Breast epithelium (tissue), 4 donors: ENCODE measurements at regions of chr12 and their contacts with region 1.

Region 1: GRCh38 chr12:90712671-90713070 is 242.3 kb downstream of the CCER1 start:
- DNase-seq: no peak
- H3K4me3 ChIP-seq: no peak overlapping the region
- H3K27ac ChIP-seq: no peak overlapping the region
- H3K4me1 ChIP-seq: no peaks in the 10 kb centered on the region
- H3K27me3 ChIP-seq: no peaks in the 10 kb centered on the region
- CTCF ChIP-seq: no peak
- POLR2A ChIP-seq: no peak

Region 2: GRCh38 chr12:90163975-90164374 is 548.7 kb before region 1 on chr12:
- intact Hi-C with region 1: loop called (anchors 5 kb)
- DNase-seq: no peak
- H3K4me3 ChIP-seq: no peak overlapping the region
- H3K27ac ChIP-seq: no peak overlapping the region
- H3K4me1 ChIP-seq: no peaks in the 10 kb centered on the region
- H3K27me3 ChIP-seq: no peaks in the 10 kb centered on the region
- CTCF ChIP-seq: no peak
- POLR2A ChIP-seq: no peak

Region 3: DNA sequence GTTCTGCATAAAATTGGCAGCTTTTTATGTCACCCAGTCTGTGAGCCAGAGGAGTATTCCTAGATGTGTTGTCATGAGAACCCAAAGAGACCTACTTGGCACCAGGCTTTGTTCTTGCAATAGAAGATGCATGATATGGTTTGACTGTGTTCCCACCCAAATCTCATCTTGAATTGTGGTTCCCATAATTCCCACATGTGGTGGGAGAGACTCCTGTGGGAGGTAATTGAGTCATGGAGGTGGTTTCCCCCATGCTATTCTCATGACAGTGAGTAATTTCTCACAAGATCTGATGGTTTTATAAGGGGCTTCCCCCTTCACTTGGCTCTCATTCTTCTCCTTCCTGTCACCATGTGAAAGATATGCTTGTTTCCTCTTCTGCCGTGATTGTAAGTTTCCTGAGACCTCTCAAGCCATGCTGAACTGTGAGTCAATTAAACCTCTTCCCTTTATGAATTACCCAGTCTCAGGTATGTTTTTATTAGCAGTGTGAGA is 432.1 kb before region 1 on chr12:
- intact Hi-C with region 1: no loop called
- DNase-seq: no peak
- H3K4me3 ChIP-seq: no peak overlapping the region
- H3K27ac ChIP-seq: no peak overlapping the region
- H3K4me1 ChIP-seq: no peaks in the 10 kb centered on the region
- H3K27me3 ChIP-seq: no peaks in the 10 kb centered on the region
- CTCF ChIP-seq: no peak
- POLR2A ChIP-seq: no peak

Region 4: DNA sequence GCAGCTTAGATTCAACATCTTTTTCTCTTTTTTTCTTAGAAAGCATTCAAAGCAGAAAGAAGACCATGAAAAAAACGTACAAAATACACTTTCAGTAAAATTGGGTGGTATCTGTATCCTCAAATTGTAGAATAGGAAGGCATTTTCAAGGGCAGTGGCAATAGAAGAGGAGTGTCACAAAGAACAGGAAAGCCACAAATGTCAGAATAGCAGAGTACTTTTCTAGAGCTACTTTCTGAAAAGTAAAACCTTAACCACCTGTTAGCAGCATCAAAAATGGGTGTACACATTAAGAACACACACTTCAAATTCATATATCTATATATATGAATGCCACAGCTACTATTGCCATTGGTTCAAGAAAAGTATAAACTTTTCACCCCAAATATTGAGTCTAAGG is 882.0 kb after region 1 on chr12:
- intact Hi-C with region 1: no loop called
- DNase-seq: no peak
- H3K4me3 ChIP-seq: no peak overlapping the region
- H3K27ac ChIP-seq: no peak overlapping the region
- H3K4me1 ChIP-seq: no peaks in the 10 kb centered on the region
- H3K27me3 ChIP-seq: no peaks in the 10 kb centered on the region
- CTCF ChIP-seq: no peak
- POLR2A ChIP-seq: no peak

Region 5: DNA sequence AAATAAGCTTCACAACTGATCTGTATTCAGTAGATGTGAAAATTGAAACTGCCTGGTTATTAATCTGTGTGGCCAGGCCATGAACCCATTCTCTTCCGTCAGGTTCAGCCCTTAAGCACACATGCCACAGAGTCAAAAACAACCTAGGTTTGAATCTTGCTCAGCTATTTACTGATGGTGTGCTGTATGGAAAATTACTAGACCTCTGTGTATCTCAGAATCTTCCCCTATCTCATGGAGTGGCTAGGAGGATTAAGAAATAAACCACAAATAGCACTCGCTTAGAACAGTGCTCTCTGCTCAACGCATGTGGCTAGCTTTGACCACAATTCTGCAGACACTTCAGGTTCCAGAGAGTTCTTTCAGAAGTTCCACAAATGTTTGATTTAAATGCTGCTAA is 1749.4 kb after region 1 on chr12:
- intact Hi-C with region 1: no loop called
- DNase-seq: no peak
- H3K4me3 ChIP-seq: no peak overlapping the region
- H3K27ac ChIP-seq: no peak overlapping the region
- H3K4me1 ChIP-seq: no peaks in the 10 kb centered on the region
- H3K27me3 ChIP-seq: no peaks in the 10 kb centered on the region
- CTCF ChIP-seq: no peak
- POLR2A ChIP-seq: no peak